MCF 10A (cell line): ENCODE measurements at regions of chr10 and their contacts with region 1.

Region 1: DNA sequence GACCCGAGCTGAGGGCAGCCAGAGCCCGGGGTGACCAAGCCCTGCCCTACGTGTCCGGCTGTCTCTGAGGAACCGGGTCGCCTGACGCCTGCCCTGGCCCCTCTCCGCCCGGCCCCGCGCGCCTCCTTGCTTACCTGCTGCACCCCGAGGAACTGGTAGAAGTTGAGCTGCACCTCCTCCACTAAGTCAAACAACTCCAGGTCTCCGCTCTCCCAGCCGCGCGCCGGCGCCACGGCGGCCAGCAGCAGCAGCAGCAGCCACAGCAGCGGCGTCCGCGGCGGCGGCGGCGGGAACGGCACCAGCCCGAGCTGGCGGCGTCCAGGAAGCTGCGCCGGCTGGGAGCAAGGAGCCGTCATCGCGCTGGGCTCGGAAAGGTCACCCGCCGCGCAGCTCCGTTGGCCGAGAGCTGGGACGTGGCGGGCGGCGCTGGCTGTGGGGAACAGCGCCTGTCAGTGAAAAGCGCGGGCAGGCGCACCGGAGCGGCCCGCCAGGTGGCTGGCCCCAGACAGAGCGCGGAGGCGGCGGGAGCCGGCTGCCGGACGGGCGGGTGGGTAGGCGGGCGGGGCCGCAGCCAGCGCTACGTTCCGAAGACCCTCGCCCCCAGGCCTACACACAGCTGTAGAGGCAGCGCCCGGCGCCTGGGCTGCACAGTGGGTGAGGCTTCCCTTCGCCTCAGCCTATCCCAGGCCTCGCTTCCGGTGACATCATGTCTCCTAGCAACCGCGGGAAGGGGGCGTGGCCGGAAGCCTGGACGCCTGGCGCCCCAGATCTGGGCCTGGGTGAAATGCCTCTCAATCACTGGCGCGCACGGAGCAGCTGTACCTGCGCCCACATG is at the start of gene DNAJC1:
- DNase-seq: peak; percentile 97
- H3K4me3 Mint-ChIP-seq: peak within 1 kb of the TSS; percentile 79
- H3K27ac Mint-ChIP-seq: peak within 1 kb of the TSS; percentile 79
- H3K4me1 Mint-ChIP-seq: peaks cover 13% of the 10 kb centered on the region
- H3K27me3 Mint-ChIP-seq: no peaks in the 10 kb centered on the region
- CTCF ChIP-seq: no peak
- total RNA-seq, gene DNAJC1: 57.8 and 69.5 TPM in 2 replicates

Region 2: GRCh38 chr10:21525367-21526183 is 477.7 kb before region 1 on chr10 and contains the start of gene SKIDA1:
- CTCF ChIA-PET with region 1: no interaction called
- POLR2A ChIA-PET with region 1: interaction called, 12 read pairs
- intact Hi-C with region 1: no loop called
- DNase-seq: peak; percentile 84
- H3K4me3 Mint-ChIP-seq: peak within 1 kb of the TSS; percentile 97
- H3K27ac Mint-ChIP-seq: peak within 1 kb of the TSS; percentile 100
- H3K4me1 Mint-ChIP-seq: peaks cover 10% of the 10 kb centered on the region
- H3K27me3 Mint-ChIP-seq: no peaks in the 10 kb centered on the region
- CTCF ChIP-seq: no peak
- total RNA-seq, gene SKIDA1: 0.56 and 1.2 TPM in 2 replicates

Region 3: DNA sequence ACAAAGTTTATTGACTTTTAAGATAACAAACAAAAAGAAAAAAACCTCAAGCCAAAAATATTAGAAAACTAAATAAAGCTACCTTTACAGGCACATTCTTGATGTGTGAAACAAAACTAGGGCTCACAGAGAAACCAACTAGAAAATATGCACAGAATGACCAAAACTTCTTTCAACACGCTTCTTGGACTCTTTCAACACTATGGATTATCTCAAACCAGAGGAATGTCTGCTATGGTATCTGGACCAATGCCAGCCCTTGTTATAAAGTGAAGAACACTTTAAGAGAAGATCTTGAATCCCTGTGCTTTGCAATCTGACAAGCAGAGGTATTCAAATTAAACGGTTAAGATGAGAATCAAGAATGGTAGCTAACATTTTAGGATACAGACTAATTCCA is 76.3 kb before region 1 on chr10:
- CTCF ChIA-PET with region 1: no interaction called
- POLR2A ChIA-PET with region 1: no interaction called
- intact Hi-C with region 1: no loop called
- DNase-seq: peak; percentile 92
- H3K4me3 Mint-ChIP-seq: peak overlapping the region; percentile 46
- H3K27ac Mint-ChIP-seq: peak overlapping the region; percentile 70
- H3K4me1 Mint-ChIP-seq: peaks cover 14% of the 10 kb centered on the region
- H3K27me3 Mint-ChIP-seq: no peaks in the 10 kb centered on the region
- CTCF ChIP-seq: no peak

Region 4: GRCh38 chr10:22086730-22087389 is 83.6 kb after region 1 on chr10:
- CTCF ChIA-PET with region 1: no interaction called
- POLR2A ChIA-PET with region 1: interaction called, 15 read pairs
- intact Hi-C with region 1: no loop called
- DNase-seq: peak; percentile 87
- H3K4me3 Mint-ChIP-seq: peak overlapping the region; percentile 48
- H3K27ac Mint-ChIP-seq: peak overlapping the region; percentile 90
- H3K4me1 Mint-ChIP-seq: peaks cover 26% of the 10 kb centered on the region
- H3K27me3 Mint-ChIP-seq: no peaks in the 10 kb centered on the region
- CTCF ChIP-seq: no peak

Region 5: GRCh38 chr10:22325272-22326144 is 322.2 kb after region 1 on chr10:
- CTCF ChIA-PET with region 1: no interaction called
- POLR2A ChIA-PET with region 1: interaction called, 32 read pairs
- intact Hi-C with region 1: no loop called
- DNase-seq: peak; percentile 64
- H3K4me3 Mint-ChIP-seq: peak overlapping the region; percentile 80
- H3K27ac Mint-ChIP-seq: peak overlapping the region; percentile 31
- H3K4me1 Mint-ChIP-seq: peaks cover 29% of the 10 kb centered on the region
- H3K27me3 Mint-ChIP-seq: peaks cover 11% of the 10 kb centered on the region
- CTCF ChIP-seq: no peak

Region 6: DNA sequence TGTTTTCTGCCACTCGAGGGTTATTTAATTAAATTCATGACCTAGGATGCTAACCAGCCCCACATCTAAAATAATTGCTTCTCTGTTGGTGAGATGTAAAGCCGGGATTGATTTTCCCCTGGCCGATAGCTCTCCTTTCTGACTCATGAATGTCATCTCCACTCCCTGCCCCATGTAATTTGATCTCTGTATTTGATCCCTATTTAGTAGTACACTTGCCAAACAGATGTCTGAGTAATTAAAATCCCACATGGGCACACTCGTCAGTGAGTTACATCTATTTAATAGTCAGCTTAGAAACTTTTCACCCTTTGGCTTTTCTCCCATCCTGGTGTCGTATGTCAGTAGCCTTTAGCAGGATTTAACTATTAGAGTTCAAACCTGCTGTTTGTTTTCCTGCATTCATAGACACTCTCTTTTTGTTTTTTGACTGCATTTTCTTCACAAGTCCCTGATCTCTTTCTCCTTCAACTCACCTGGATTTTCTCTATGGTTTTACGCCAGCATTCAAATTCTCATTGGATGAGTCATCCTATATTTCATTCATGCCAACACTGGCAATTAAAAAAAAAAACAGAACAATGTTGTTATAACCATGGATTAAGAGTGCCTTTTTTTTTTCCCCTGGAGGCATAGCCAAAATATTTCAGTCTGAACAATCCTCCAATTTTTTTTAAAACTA is 424.7 kb after region 1 on chr10:
- CTCF ChIA-PET with region 1: interaction called, 4 read pairs
- POLR2A ChIA-PET with region 1: interaction called, 5 read pairs
- intact Hi-C with region 1: loop called (anchors 5 kb)
- DNase-seq: peak; percentile 93
- H3K4me3 Mint-ChIP-seq: peak overlapping the region; percentile 49
- H3K27ac Mint-ChIP-seq: peak overlapping the region; percentile 63
- H3K4me1 Mint-ChIP-seq: peaks cover 41% of the 10 kb centered on the region
- H3K27me3 Mint-ChIP-seq: no peaks in the 10 kb centered on the region
- CTCF ChIP-seq: no peak